H1 (cell line): ENCODE measurements at regions of chr6 and their contacts with region 1.

Region 1: GRCh38 chr6:155003476-155003875 is 8.4 kb downstream of the TIAM2 start:
- DNase-seq: no peak
- H3K4me3 ChIP-seq: no peak overlapping the region
- H3K27ac ChIP-seq: no peak overlapping the region; the same call in 1 of the 2 replicates
- H3K4me1 ChIP-seq: peaks cover 3 to 7% (median 5%) of the 10 kb centered on the region in 4 experiments; a peak in 6 of 7 replicates
- H3K27me3 ChIP-seq: no peaks in the 10 kb centered on the region
- CTCF ChIP-seq: no peak
- EP300 ChIP-seq: no peak
- POLR2A ChIP-seq: no peak
- RAD21 ChIP-seq: no peak

Region 2: DNA sequence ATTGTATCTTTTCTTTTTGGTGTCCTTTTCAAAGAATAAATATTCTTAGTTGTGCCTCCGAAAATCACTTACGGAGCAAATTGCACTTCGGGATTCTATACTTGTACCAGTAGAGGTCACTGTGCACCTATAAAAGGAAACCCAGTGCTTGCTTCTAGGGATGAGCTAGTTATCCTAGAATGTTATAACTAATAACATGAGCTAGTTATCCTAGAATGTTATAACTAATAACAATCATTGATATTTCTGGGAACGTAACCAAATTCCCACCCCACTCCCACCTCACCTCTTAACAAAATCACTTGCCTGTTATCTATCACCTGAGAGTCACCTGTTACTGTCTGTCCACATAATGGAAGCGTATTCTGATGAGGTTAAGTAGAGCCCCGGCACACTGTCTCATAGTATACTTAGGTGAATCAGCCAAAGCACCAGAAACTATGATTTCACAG is 135.3 kb before region 1 on chr6:
- CTCF ChIA-PET with region 1: interaction called, 10 read pairs
- POLR2A ChIA-PET with region 1: no interaction called
- DNase-seq: no peak
- H3K4me3 ChIP-seq: no peak overlapping the region
- H3K27ac ChIP-seq: no peak overlapping the region
- H3K4me1 ChIP-seq: peaks cover 0 to 7% (median 5%) of the 10 kb centered on the region in 4 experiments; a peak in 3 of 7 replicates
- H3K27me3 ChIP-seq: no peaks in the 10 kb centered on the region
- CTCF ChIP-seq: peak in 2 of 3 experiments; percentile 56 to 69; a peak in 2 of 4 replicates
- EP300 ChIP-seq: no peak
- POLR2A ChIP-seq: no peak
- RAD21 ChIP-seq: peak; percentile 83 to 89